CD14-positive monocyte (primary cell): ENCODE measurements at regions of chr10 and their contacts with region 1.

Region 1: GRCh38 chr10:17851611-17852010 is 42.5 kb downstream of the MRC1 start:
- DNase-seq: peak; percentile 68 to 76 (median 69)
- H3K4me3 ChIP-seq: no peak overlapping the region
- H3K4me3 Mint-ChIP-seq: peak overlapping the region in 1 of 2 donors; percentile 79
- H3K27ac ChIP-seq: no peak overlapping the region
- H3K27ac Mint-ChIP-seq: peak overlapping the region in 5 of 7 donors; percentile 2 to 74 (median 63)
- H3K4me1 ChIP-seq: peaks cover 25 to 30% of the 10 kb centered on the region in 2 donors
- H3K4me1 Mint-ChIP-seq: peaks cover 38% of the 10 kb centered on the region
- H3K27me3 ChIP-seq: no peaks in the 10 kb centered on the region
- H3K27me3 Mint-ChIP-seq: no peaks in the 10 kb centered on the region
- CTCF ChIP-seq: no peak

Region 2: GRCh38 chr10:17637869-17638268 is 213.7 kb before region 1 on chr10:
- intact Hi-C with region 1: no loop called
- DNase-seq: no peak
- H3K4me3 ChIP-seq: no peak overlapping the region
- H3K4me3 Mint-ChIP-seq: no peak overlapping the region
- H3K27ac ChIP-seq: no peak overlapping the region
- H3K27ac Mint-ChIP-seq: no peak overlapping the region
- H3K4me1 ChIP-seq: peaks cover under 1 to 2% of the 10 kb centered on the region in 2 donors
- H3K4me1 Mint-ChIP-seq: peaks cover 3% of the 10 kb centered on the region
- H3K27me3 ChIP-seq: no peaks in the 10 kb centered on the region
- H3K27me3 Mint-ChIP-seq: peaks cover 0 to 3% (median 0%) of the 10 kb centered on the region in 3 donors
- CTCF ChIP-seq: no peak

Region 3: DNA sequence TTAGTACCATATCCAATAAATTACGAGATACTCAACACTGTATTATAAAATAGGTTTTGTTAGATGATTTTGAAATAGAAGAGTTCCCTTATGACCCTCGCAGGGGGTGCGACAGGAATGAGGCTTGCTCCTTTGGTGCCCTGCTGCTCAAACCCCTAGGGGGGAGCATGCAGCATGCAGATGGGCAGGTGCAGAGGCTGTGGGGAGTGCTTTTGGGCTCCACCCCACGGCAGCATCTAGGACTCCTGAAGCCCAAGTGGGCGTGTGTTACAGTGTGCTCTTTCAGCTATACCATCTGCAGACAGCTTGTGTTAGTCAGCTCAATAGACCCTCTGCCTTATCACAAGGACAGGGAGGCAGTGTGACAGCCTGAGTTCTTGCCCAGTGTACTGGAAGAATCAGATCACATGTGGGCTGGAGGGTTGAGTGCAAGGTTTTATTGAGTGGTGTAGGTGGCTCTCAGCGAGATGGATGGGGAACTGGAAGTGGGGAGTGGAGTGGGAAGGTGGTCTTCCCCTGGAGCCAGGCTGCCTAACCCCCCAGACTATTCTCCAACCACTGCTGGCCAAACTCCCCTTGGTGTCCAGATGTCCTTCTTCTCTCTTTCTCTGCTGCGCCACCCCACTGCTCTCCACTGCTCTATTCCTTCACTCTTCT is 45.6 kb before region 1 on chr10:
- intact Hi-C with region 1: loop called in 1 of 2 experiments (anchors 10 kb)
- DNase-seq: peak in 1 of 3 donors; percentile 44
- H3K4me3 ChIP-seq: no peak overlapping the region
- H3K4me3 Mint-ChIP-seq: no peak overlapping the region
- H3K27ac ChIP-seq: no peak overlapping the region
- H3K27ac Mint-ChIP-seq: peak overlapping the region in 1 of 7 donors; percentile 7
- H3K4me1 ChIP-seq: peaks cover 31 to 39% of the 10 kb centered on the region in 2 donors
- H3K4me1 Mint-ChIP-seq: peaks cover 37% of the 10 kb centered on the region
- H3K27me3 ChIP-seq: no peaks in the 10 kb centered on the region
- H3K27me3 Mint-ChIP-seq: peaks cover 5 to 7% (median 6%) of the 10 kb centered on the region in 3 donors
- CTCF ChIP-seq: peak; percentile 61